H1 (cell line): ENCODE measurements at regions of chrX and their contacts with region 1.

Region 1: DNA sequence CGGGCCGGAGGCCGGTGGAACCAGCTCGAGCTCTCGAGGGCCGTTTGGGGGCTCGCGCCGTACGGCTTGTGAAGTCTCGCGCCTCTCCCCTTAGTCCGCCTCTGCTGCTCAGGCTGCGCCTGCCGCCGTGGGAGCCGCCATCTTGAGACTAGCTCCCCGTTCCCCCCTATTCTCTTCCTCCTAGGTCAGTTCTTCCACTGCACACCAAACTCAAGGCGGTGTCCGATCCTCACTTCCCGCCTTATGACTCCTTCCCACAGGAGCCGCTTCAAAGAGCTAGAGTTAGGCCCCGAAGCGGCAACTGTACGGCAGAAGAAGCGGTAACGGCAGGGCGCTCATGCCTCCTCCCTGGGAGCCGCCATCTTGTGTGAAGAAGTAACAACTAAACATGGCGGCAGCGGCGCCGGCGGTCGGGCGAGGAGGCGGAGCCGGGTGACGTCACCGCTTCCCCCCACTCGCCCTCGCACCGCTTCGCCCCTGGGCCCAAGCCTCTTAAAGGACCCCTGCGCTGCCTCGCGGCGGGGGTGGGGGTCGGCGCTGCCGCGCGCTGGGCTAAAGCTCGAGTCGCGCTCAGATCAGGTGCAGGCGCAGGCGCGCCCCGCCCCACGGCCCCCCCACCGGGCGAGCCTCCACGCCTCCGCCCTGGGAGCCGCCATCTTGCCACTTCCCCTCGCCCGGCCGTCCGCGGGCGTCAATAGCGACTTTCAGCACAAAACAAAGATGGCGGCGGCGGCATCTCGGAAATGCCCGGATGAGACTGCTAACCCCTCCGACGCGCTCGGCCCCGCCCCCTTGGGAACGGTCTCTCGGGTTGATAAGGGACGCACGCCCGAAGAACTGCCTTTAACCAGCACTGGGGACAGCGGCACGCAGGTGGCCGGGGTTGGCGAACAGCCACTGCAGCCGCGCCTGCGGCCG is at the start of gene HCFC1:
- DNase-seq: peak in 1 of 2 experiments; percentile 86
- H3K4me3 ChIP-seq: peak within 1 kb of the TSS; percentile 92 to 99 (median 95)
- H3K27ac ChIP-seq: peak within 1 kb of the TSS; percentile 99
- H3K4me1 ChIP-seq: peaks cover 4 to 24% (median 12%) of the 10 kb centered on the region in 4 experiments
- H3K27me3 ChIP-seq: no peaks in the 10 kb centered on the region
- CTCF ChIP-seq: no peak
- EP300 ChIP-seq: 0 out of 3 replicates have a peak, but pooled peaks of 1 of the 2 experiments have one; percentile 43
- POLR2A ChIP-seq: peak in 1 of 2 experiments; percentile 64; a peak in 2 of 3 replicates
- RAD21 ChIP-seq: no peak
- total RNA-seq, gene HCFC1: 117 and 120 TPM in 2 replicates

Region 2: DNA sequence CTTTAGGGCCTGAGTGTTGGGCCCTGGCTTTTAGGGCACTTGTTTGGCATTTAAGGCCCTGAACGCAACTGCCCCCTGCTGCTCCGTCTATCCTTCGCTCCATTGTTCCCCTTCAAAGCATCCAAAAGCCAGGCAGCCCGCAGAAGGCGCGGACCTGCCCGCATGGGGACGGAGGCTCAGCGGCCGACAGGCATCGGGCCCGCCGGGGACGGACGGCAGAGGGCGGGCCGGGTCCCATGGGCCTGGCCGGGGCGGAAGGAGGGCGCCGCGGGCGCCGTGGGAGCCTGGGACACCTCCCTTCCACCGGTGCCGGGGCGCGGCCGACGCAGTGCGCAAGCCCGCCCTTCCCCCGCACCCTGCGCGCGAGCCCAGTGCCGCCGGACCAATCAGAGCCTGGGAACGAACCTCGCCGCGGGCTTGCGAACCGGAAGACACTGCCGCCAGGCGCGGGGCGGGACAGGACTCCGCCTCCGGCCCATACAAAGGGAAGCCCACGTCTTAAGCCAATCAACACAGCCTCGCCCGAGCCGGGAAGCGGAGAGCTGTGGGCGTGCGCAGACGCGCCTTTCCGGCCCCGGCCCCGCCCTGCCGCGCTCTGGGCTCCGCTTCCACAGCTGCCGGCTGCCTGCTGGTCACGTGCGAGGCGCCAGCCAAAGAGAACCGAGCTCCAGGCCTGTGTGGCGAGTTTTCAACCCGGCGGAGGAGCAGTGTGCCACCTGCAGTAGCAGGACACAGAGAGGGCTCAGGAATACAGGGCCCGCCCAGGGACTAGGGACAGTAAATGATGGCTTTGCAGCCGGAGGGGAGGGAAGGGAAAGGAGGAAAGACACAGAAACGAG is 43.6 kb before region 1 on chrX:
- CTCF ChIA-PET with region 1: interaction called, 5 read pairs
- POLR2A ChIA-PET with region 1: interaction called, 43 read pairs
- DNase-seq: peak; percentile 84 to 87
- H3K4me3 ChIP-seq: peak overlapping the region; percentile 55 to 77 (median 62)
- H3K27ac ChIP-seq: peak overlapping the region; percentile 79
- H3K4me1 ChIP-seq: peaks cover 3 to 18% (median 12%) of the 10 kb centered on the region in 4 experiments
- H3K27me3 ChIP-seq: no peaks in the 10 kb centered on the region
- CTCF ChIP-seq: no peak
- EP300 ChIP-seq: no peak
- POLR2A ChIP-seq: peak in 1 of 2 experiments; percentile 55; a peak in 2 of 3 replicates
- RAD21 ChIP-seq: no peak

Region 3: DNA sequence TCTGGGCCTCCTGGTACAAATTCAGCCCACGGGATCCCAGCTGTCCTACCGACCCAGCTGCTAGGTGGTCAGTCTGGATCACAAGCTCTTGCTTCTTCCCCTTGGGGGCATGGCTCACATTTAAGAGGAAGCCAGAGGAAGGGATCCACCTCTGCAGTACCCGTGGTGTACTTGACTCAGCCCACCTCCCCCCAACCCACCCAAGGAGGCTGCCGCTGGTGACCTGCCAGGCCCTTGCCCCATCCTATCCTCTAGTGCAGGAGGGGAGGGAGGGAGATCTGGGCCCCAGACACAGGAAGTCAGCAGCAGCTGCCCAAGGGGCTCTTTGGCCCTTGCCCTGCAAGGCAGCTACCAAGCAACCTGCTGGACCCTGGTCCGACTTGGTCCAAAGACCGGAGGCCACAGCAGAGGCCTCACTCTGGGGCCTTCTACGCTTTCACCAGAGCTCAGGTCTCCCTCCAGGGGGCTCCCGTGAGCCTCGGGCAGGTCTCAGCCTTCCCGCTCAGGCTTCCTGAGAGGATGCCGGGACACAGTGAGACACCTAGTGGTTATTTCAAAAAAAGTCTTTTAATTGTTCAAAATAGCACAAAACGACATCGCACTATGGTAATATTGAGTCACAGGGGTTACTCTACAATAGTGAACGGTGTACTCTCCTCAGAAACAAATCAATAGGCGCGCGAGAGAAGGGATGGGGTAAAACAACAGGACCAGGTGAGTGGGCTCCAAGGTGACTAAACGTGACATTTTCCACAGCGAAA is 24.5 kb before region 1 on chrX:
- CTCF ChIA-PET with region 1: interaction called, 102 read pairs
- POLR2A ChIA-PET with region 1: interaction called, 19 read pairs
- DNase-seq: peak in 1 of 2 experiments; percentile 77
- H3K4me3 ChIP-seq: no peak overlapping the region
- H3K27ac ChIP-seq: peak overlapping the region; percentile 45; the same call in 1 of the 2 replicates
- H3K4me1 ChIP-seq: peaks cover 0 to 14% (median 3%) of the 10 kb centered on the region in 4 experiments; a peak in 5 of 7 replicates
- H3K27me3 ChIP-seq: no peaks in the 10 kb centered on the region
- CTCF ChIP-seq: peak in 2 of 3 experiments; percentile 77 to 99; a peak in 3 of 4 replicates
- EP300 ChIP-seq: no peak
- POLR2A ChIP-seq: no peak
- RAD21 ChIP-seq: peak; percentile 51 to 64

Region 4: GRCh38 chrX:153981771-153982533 is 10.2 kb after region 1 on chrX:
- CTCF ChIA-PET with region 1: no interaction called
- POLR2A ChIA-PET with region 1: interaction called, 10 read pairs
- DNase-seq: no peak
- H3K4me3 ChIP-seq: no peak overlapping the region
- H3K27ac ChIP-seq: no peak overlapping the region
- H3K4me1 ChIP-seq: peaks cover 0 to 4% (median 0%) of the 10 kb centered on the region in 4 experiments; a peak in 1 of 7 replicates
- H3K27me3 ChIP-seq: no peaks in the 10 kb centered on the region
- CTCF ChIP-seq: no peak
- EP300 ChIP-seq: no peak
- POLR2A ChIP-seq: no peak
- RAD21 ChIP-seq: no peak

Region 5: DNA sequence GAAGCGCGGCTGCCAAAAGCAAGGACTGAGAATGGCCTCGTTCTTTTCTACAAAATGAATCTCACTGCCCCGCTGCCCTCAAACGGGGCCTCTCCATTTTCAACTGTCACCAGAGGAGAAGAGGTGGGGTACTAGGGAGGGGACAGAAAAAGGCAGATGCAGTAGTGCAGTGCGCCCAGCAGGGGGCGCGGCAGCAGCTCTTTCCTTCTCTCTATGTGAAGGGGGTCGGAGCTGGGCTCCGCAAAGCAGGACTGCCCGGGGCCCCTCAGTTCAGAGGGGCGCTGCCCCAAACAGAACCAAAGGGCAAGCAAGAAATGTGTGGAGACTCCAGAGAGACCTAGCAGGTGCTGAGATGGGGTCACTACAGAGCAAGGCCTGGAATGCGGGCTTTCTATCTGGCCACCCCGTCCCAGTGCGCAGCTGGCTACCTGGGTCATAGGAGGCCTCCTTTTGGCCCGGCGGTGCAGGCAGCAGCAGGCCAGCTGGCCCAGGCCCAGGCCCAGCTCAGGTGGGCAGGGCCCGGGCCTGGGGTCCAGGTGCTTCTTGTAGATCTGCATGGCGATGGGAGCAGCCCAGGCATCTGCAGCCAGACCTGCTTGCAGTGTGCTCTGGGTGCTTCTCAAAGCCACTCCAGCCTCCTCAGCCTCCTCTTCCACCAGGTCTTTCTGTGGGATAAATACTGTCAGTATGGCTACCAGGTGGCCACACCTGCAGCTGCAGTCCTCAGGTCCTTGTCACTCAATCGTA is 42.1 kb after region 1 on chrX:
- CTCF ChIA-PET with region 1: interaction called, 8 read pairs
- POLR2A ChIA-PET with region 1: interaction called, 15 read pairs
- DNase-seq: peak in 1 of 2 experiments; percentile 72
- H3K4me3 ChIP-seq: no peak overlapping the region
- H3K27ac ChIP-seq: no peak overlapping the region
- H3K4me1 ChIP-seq: peaks cover 0 to 7% (median 3%) of the 10 kb centered on the region in 4 experiments; a peak in 4 of 7 replicates
- H3K27me3 ChIP-seq: no peaks in the 10 kb centered on the region
- CTCF ChIP-seq: peak in 2 of 3 experiments; percentile 62 to 63; a peak in 3 of 4 replicates
- EP300 ChIP-seq: no peak
- POLR2A ChIP-seq: no peak
- RAD21 ChIP-seq: peak; percentile 59 to 62

Region 6: DNA sequence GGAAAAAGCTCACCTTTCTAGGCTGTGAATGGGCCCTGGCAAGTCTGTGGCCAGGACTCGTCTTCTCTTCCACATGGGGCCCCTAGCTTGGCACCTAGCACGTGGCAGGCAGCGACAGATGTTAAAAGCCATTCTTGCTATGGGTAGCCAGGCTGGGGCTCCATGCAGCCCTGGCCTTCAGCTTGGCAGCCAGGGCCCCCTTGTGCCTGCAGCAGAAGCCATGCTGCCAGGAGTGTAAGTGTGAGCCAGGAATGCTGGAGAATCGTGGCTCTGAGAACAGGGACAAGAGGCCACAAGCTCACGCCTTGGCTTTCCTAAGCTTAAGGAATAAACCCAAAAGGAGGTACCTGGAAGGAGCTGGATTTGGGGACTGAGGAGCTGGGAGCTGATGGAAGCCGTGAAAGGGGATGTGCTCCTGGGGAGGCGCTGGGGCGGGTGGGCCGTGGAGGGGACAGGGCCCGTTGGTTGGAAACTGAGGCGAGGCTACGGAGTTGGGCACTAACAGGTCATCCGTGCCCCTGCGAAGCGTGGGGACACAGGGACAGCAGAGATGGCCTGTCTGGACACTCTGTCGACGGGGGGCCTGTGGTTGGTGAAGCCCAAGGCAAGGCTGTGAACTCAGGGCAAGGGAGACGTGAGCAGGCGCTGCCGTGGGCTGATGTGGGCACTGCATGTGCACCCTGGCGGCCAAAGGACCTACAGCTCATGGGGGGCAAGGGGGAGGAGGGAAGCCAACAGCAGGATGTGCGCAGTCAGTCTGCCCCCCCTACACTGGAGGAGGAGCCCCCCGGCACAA is 171.4 kb after region 1 on chrX:
- CTCF ChIA-PET with region 1: no interaction called
- POLR2A ChIA-PET with region 1: no interaction called
- DNase-seq: no peak
- H3K4me3 ChIP-seq: no peak overlapping the region
- H3K27ac ChIP-seq: no peak overlapping the region
- H3K4me1 ChIP-seq: no peaks in the 10 kb centered on the region
- H3K27me3 ChIP-seq: no peaks in the 10 kb centered on the region
- CTCF ChIP-seq: no peak
- EP300 ChIP-seq: no peak
- POLR2A ChIP-seq: no peak
- RAD21 ChIP-seq: no peak